ENCODE measurements at regions of chr22 and their contacts with region 1.

Region 1: DNA sequence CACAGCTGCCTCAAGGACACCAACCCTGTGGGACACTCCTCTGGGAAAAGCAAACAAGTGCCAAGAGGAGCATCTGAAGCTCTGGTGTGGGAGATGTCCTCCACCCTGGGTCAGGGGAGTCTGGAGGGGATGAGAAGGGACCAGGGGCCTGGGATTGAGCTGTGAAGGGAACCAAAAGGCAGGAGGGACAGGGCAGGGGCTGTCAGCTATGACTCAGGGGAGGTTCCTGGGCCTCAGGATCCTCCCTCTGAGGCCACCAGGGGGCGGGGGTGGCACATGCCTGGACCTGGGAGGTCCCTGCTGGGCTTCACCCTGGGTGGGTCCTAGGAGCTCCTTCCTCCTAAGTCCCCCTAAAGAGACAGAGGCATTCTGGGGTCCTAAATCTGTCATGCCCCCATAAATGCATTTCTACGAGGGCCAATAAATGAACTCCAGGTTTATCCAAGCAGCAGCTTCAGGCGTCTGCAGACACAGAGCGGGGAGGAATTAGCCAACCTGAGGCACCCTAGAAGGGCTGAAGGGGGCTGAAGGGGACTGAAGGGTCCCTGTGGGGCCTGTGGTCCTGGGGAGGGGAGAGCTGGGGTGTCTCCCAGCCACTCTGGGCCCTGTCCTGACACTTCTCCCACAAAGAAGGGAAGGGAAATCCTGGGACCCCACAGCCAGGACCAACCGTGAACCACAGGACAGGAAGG is 31.9 kb upstream of the IGLL5 start:
- DNase-seq: peak; percentile 93 to 100 (median 98)
- ATAC-seq: peak; percentile 98
- H3K4me3 ChIP-seq: no peak overlapping the region
- H3K27ac ChIP-seq: no peak overlapping the region
- H3K4me1 ChIP-seq: no peaks in the 10 kb centered on the region
- H3K27me3 ChIP-seq: peaks cover 22 to 38% of the 10 kb centered on the region in 2 experiments
- CTCF ChIP-seq: no peak
- EP300 ChIP-seq: no peak
- POLR2A ChIP-seq: no peak
- RAD21 ChIP-seq: no peak

Region 2: GRCh38 chr22:22342697-22343580 is 512.8 kb before region 1 on chr22:
- CTCF ChIA-PET with region 1: no interaction called
- POLR2A ChIA-PET with region 1: no interaction called
- in situ Hi-C with region 1: no loop called
- intact Hi-C with region 1: no loop called
- DNase-seq: peak; percentile 95 to 99 (median 98)
- ATAC-seq: peak; percentile 98
- H3K4me3 ChIP-seq: no peak overlapping the region
- H3K27ac ChIP-seq: no peak overlapping the region
- H3K4me1 ChIP-seq: no peaks in the 10 kb centered on the region
- H3K27me3 ChIP-seq: peaks cover 11 to 33% of the 10 kb centered on the region in 2 experiments; a peak in 3 of 5 replicates
- CTCF ChIP-seq: peak in 2 of 3 experiments; percentile 99 to 100; a peak in 4 of 6 replicates
- EP300 ChIP-seq: no peak
- POLR2A ChIP-seq: no peak
- RAD21 ChIP-seq: peak in 1 of 2 experiments; percentile 92; a peak in 2 of 4 replicates

Region 3: GRCh38 chr22:22655452-22656290 is 200.1 kb before region 1 on chr22:
- CTCF ChIA-PET with region 1: no interaction called
- POLR2A ChIA-PET with region 1: no interaction called
- in situ Hi-C with region 1: no loop called
- intact Hi-C with region 1: no loop called
- DNase-seq: no peak
- ATAC-seq: no peak; the same call in 1 of the 3 replicates
- H3K4me3 ChIP-seq: no peak overlapping the region
- H3K27ac ChIP-seq: no peak overlapping the region
- H3K4me1 ChIP-seq: peaks cover 0 to 21% of the 10 kb centered on the region in 2 experiments; a peak in 3 of 5 replicates
- H3K27me3 ChIP-seq: peaks cover 28 to 48% of the 10 kb centered on the region in 2 experiments
- CTCF ChIP-seq: no peak
- EP300 ChIP-seq: no peak
- POLR2A ChIP-seq: no peak
- RAD21 ChIP-seq: no peak

Region 4: DNA sequence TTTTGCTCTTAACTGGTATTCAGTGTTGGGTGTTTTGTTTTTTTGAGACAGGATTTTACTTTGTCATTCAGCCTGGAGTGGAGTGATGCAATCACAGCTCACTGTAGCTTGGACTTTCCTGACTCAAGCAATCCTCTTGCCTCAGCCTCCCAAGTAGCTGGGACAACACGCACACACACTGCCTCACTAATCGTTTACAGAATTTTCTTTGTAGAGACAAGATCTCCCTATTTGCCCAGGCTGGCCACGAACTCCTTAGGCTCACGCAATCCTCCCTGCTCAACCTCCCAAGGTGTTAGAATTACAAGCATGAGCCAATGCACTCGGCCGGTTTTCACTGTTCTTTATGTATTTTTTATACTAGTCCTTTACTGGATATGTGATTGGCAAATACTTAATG is 19.1 kb before region 1 on chr22:
- CTCF ChIA-PET with region 1: no interaction called
- POLR2A ChIA-PET with region 1: interaction called, 40 read pairs
- in situ Hi-C with region 1: no loop called
- intact Hi-C with region 1: no loop called
- DNase-seq: peak in 1 of 4 experiments; percentile 53
- ATAC-seq: peak; percentile 71
- H3K4me3 ChIP-seq: no peak overlapping the region
- H3K27ac ChIP-seq: no peak overlapping the region
- H3K4me1 ChIP-seq: peaks cover 0 to 7% of the 10 kb centered on the region in 2 experiments; a peak in 1 of 5 replicates
- H3K27me3 ChIP-seq: peaks cover 25 to 33% of the 10 kb centered on the region in 2 experiments
- CTCF ChIP-seq: no peak
- EP300 ChIP-seq: no peak
- POLR2A ChIP-seq: no peak
- RAD21 ChIP-seq: no peak

Region 5: DNA sequence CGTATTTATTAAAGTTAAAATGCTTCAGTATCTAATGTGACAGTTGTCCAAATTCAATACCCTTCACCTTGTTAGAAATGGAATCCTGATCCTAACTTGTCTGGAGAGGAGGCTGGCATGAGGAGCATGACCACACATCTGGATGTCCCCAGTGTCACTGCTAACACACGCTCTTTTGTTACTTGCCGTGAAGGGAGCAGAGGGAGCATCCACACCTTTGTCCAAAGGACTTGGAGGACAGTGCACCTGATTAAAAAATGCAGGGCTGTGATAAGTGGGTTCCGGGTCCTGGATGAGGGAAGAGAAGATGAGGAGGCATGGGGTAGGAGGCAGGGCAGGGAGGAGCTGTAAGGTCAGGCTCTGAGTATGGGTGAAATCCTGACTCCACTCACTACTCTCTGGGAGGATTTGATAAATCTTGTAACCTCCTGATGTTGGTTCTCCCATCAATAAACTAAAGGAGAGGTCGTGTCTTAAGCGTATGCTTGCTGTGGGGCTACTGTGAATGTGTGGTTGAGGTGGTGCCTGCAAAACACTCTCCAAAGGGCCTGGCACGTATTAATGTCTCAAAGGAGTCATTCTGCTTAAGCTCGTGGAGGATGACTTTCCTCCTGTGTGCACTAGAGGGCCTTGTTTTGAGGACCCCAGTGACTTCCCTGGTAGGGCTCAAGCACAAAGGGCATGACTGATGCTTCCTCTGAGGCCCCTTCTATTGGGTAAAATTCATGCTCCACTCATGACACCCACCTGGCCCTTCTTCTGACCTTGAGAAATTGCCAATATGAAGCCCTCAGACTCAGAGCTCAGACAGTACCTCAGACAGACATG is 15.0 kb after region 1 on chr22:
- CTCF ChIA-PET with region 1: interaction called, 42 read pairs
- POLR2A ChIA-PET with region 1: interaction called, 16 read pairs
- in situ Hi-C with region 1: no loop called
- intact Hi-C with region 1: no loop called
- DNase-seq: peak; percentile 53 to 84 (median 70)
- ATAC-seq: peak; percentile 82
- H3K4me3 ChIP-seq: no peak overlapping the region
- H3K27ac ChIP-seq: no peak overlapping the region
- H3K4me1 ChIP-seq: no peaks in the 10 kb centered on the region
- H3K27me3 ChIP-seq: peaks cover 0 to 45% of the 10 kb centered on the region in 2 experiments; a peak in 3 of 5 replicates
- CTCF ChIP-seq: no peak
- EP300 ChIP-seq: no peak
- POLR2A ChIP-seq: no peak
- RAD21 ChIP-seq: no peak

Region 6: DNA sequence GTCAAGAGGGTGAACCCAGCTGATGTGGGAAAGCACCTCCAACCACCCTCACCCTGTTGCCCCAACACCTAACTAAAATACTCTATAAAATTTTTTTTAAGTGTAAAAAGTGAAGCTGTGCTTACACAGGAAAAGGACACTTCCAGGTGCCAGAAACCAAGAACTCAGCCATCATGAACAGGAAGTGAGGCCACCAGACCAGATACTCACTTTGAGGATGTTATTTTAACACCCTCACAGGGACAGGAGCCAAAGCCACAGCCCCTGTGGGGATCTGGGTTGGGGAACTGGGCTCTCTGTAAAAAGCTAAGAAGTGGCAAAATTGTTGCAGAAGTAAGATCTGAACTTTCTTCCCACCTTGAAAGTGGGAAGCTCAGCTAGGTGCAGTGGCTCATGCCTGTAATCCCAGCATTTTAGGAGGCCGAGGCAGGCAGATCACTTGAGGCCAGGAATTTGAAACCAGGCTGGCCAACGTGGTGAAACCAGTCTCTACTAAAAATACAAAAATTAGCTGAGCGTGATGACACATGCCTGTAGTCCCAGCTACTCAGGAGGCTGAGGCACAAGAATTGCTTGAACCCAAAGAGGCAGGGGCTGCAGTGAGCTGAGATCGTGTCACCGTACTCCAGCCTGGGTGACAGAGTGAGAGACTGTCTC is 282.3 kb after region 1 on chr22:
- CTCF ChIA-PET with region 1: no interaction called
- POLR2A ChIA-PET with region 1: no interaction called
- in situ Hi-C with region 1: no loop called
- intact Hi-C with region 1: no loop called
- DNase-seq: peak in 1 of 4 experiments; percentile 71
- ATAC-seq: no peak
- H3K4me3 ChIP-seq: no peak overlapping the region
- H3K27ac ChIP-seq: no peak overlapping the region
- H3K4me1 ChIP-seq: peaks cover 11 to 14% of the 10 kb centered on the region in 2 experiments
- H3K27me3 ChIP-seq: peaks cover 33 to 38% of the 10 kb centered on the region in 2 experiments
- CTCF ChIP-seq: no peak
- EP300 ChIP-seq: no peak
- POLR2A ChIP-seq: no peak
- RAD21 ChIP-seq: no peak